Activated CD4-positive, alpha-beta memory T cell treated with anti-CD3 and anti-CD28 coated beads, Interleukin-2, amount 10 ng/mL, durations not matched to agents 7 days and 5 days (primary cell): ENCODE measurements at regions of chr15 and their contacts with region 1.

Region 1: DNA sequence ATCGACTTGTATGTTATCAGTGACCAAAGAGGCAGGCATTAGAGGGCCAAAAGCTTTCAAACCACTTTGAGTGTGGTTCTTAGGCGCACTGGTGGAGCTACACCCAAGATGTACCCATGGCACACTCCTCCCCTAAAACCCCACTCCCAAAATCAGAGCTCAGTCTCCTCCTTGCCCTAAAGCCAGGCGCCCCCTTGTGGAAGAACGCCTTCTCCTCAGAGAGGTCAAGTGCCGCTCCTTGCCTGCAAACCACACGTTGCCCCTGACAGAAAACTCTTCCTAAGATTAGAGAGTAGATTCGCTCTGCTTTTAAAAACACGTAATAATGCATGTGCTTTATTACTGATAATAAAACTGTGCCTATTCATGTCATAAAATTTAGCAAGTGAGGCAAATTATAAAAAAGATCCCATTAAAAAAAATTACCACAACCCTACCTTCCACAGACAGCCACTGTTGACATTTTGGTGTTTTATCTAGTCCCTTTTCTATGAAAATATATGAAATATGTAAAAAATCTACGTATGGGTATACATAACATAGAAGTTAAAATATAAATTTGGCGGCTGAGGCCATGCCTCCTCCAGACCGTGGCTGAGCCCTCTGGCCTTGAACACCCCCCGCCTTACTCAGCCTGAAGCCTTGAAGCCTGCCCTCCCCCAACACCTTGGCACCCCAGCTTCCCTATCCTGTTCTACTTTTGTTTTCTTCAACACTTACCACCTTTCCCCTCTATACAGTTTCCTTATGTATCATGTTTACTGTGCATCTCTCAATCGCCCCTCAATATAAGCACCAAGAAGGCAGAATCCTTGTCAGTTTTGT is 33.5 kb downstream of the BCL2L10 start:
- DNase-seq: peak; percentile 83
- H3K4me3 Mint-ChIP-seq: no peak overlapping the region
- H3K27ac Mint-ChIP-seq: no peak overlapping the region
- H3K4me1 Mint-ChIP-seq: peaks cover 43% of the 10 kb centered on the region
- H3K27me3 Mint-ChIP-seq: no peaks in the 10 kb centered on the region

Region 2: DNA sequence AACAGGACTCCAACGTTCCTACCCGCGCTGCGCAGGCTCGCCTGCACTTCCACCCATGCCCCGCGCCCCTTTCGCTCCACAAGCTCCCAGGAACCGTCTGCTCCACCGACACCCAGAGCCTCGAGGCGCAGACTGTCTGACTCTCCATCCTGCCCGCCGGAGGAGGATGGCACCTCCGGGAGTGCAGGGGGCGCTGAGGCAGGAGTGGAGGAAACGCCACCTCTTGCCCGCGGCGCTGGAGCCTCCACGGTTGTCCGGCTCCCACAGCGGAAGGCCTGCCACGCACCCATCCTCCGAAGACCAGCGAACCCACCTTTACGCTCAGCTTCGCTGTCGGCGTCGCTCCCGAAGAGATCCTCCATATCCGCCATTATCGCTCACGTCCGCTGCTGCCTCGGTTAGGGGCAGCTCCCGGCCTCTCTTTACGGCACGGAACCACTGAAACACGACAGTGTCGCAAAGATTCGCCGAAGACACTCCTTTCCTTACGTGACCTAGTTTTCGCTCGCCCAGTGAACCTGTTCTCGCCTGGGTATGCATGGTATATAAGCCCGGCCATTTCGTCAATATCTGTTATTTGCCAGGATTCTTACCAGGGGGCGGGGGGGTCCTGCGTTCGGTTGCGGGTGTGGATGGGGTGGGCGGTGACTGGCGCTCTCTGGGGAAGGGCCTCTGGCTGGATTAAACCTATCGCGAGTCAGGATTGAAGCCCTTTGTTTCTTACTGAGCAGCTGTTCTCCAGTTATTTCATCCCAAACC is 107.5 kb before region 1 on chr15 and contains the start of gene LEO1:
- CTCF ChIA-PET with region 1: interaction called, 13 read pairs
- POLR2A ChIA-PET with region 1: interaction called, 8 read pairs
- DNase-seq: peak; percentile 92
- H3K4me3 Mint-ChIP-seq: peak within 1 kb of the TSS; percentile 93
- H3K27ac Mint-ChIP-seq: peak within 1 kb of the TSS; percentile 87
- H3K4me1 Mint-ChIP-seq: peaks cover 33% of the 10 kb centered on the region
- H3K27me3 Mint-ChIP-seq: no peaks in the 10 kb centered on the region
- total RNA-seq, gene LEO1: 31.2 to 32.8 TPM

Region 3: DNA sequence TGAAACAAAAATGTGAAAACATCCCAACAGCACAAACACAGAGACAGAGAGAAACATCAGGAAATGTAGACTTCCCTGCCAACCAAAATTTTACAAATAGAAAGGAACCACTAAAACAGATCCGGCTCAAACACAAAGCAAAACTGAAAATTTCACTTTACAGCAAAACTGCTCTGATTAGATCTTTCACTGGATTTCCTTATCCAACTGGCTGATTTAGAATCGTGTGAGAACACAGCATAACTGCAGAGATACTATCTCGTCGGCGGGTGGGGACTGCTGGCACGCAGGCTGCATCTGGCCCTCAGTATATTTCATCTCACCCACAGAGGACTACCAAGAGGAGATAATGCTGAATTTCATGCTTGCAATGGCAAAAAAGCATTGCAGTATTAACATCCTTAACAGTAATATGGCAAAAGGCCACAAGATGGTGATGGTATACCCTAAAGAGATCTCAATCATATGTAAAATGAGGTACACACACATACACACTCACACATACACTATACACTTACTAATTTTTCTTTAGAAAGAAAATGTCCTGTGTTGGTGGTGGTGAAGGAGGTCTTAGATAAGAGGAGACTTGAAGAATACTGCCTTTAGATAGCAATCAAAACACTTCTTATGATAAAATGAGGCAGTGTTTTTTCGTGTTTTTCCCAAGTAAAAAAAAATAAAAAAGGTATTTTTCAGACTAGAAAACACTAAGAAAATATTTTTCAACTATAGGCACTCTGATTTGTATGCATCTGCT is 96.9 kb before region 1 on chr15:
- CTCF ChIA-PET with region 1: interaction called, 13 read pairs
- POLR2A ChIA-PET with region 1: interaction called, 6 read pairs
- DNase-seq: peak; percentile 80
- H3K4me3 Mint-ChIP-seq: peak overlapping the region; percentile 78
- H3K27ac Mint-ChIP-seq: peak overlapping the region; percentile 88
- H3K4me1 Mint-ChIP-seq: peaks cover 20% of the 10 kb centered on the region
- H3K27me3 Mint-ChIP-seq: no peaks in the 10 kb centered on the region

Region 4: DNA sequence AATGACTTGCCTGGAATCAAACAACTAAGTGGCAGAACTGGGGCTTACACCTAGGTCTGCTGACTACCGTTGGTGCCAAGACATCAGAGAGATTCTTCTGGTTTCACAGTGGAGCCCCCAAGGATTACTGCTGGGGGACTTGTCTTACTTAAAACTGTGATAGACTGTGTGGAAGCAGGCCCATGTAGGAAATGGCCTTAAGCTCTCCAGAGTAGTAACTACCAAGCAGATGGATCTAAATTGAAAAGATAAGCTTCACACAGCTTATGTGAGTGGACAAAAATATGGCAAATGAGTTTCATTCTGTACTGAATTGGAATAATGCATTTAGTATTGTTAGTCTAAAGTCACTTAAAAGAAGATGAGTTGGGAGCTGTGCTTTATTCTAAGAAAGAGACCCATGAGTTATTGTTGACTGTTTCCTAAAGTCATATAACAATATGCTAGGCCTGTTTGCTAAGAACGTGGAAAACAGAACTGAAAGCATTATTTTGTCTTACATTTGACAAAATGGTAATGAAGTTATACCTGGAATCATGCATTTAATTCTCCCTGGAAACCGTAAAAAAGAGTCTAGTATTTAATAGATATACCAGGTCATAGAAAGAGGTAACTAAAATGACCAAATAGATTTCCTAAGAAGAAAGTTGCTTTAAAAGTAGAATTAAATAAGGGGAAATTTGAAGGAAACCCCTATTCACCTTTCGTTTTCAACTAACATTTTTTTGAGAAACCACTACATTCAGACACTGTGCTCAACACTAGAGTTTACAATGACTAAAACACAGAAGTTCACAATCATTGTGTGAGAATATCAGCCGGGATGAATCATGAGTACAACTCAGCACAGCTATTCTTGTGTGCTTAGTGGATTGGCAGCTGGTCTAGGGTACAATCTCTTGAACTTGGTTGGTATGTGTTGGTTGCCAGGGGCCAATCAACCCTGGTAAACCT is 73.1 kb before region 1 on chr15:
- CTCF ChIA-PET with region 1: interaction called, 14 read pairs
- POLR2A ChIA-PET with region 1: no interaction called
- DNase-seq: peak; percentile 24
- H3K4me3 Mint-ChIP-seq: peak overlapping the region; percentile 40
- H3K27ac Mint-ChIP-seq: peak overlapping the region; percentile 77
- H3K4me1 Mint-ChIP-seq: peaks cover 66% of the 10 kb centered on the region
- H3K27me3 Mint-ChIP-seq: no peaks in the 10 kb centered on the region

Region 5: DNA sequence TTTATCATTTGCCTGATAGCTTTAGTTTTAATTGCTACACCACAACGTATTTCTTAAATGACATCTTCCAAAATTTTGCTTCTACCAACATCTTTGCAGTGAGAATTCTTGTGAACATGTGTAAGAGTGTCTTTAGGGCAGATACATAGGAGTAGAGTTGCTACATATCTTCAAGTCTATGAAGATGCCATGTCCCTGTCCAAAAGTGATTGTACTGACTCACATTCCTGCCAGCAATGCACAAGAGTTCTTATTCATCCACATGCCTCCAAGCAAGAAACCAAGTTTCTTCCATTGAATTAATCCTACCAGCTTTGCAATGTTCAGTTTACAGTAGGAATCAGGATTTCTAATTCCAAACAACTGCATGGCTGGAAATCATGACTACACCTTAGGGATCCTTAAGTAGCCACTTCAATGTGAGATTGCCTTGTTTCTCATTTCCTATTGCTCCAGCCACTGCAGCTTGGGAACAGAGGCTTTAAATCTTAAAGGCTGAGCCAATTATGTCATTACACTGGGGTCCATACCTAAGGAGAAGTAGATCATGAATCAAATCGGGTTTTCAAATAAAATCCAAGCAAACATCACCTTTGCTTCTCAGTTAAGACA is 11.0 kb before region 1 on chr15:
- CTCF ChIA-PET with region 1: interaction called, 28 read pairs
- POLR2A ChIA-PET with region 1: interaction called, 3 read pairs
- DNase-seq: no peak
- H3K4me3 Mint-ChIP-seq: no peak overlapping the region
- H3K27ac Mint-ChIP-seq: no peak overlapping the region
- H3K4me1 Mint-ChIP-seq: peaks cover 24% of the 10 kb centered on the region
- H3K27me3 Mint-ChIP-seq: no peaks in the 10 kb centered on the region

Region 6: GRCh38 chr15:52139599-52140491 is 60.8 kb after region 1 on chr15:
- CTCF ChIA-PET with region 1: interaction called, 18 read pairs
- POLR2A ChIA-PET with region 1: interaction called, 3 read pairs
- DNase-seq: peak; percentile 76
- H3K4me3 Mint-ChIP-seq: no peak overlapping the region
- H3K27ac Mint-ChIP-seq: no peak overlapping the region
- H3K4me1 Mint-ChIP-seq: peaks cover 20% of the 10 kb centered on the region
- H3K27me3 Mint-ChIP-seq: no peaks in the 10 kb centered on the region

Region 7: DNA sequence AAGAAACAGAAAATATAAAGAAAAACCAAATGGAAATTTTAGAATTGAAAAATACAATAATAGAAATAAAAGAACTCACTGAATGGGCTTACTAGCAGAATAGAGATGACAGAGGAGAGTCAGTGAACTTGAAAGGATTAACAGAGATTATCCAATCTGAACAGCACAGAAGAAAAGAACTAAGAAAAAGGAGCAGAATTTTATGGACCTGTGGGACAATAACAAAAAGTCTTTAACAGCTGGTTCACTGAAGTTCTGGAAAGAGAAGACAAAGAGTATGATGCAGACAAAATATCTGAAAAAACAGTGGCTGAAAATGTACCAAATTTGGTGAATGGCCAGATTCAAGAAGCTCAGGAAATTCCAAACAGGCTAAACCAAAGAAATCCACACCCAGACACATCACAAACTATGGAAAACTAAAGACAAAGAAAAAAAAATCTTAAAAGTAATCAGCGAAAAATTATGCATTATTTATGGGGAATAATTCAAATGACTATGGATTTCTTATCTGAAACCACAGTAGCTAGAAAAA is 121.8 kb after region 1 on chr15:
- CTCF ChIA-PET with region 1: no interaction called
- POLR2A ChIA-PET with region 1: no interaction called
- DNase-seq: no peak
- H3K4me3 Mint-ChIP-seq: no peak overlapping the region
- H3K27ac Mint-ChIP-seq: no peak overlapping the region
- H3K4me1 Mint-ChIP-seq: no peaks in the 10 kb centered on the region
- H3K27me3 Mint-ChIP-seq: peaks cover 3% of the 10 kb centered on the region

Region 8: DNA sequence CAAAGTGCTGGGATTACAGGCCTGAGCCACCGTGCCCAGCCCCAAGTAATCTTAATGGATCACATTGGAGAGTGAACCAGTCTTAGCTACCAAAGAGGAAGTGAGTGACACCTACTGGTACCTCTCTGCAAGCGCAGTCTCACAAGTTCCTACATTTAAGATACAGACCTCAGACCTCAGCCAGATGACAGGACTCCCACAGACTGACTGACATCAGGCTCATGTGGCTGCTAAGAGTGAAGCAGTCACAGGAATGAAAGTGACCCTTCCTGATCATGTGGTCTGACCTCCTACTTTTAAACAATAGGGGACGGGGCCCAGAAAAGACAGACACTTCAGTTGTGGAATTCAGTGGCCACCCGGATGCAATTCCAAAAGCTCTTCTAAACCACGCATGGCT is 148.4 kb after region 1 on chr15:
- CTCF ChIA-PET with region 1: interaction called, 14 read pairs
- POLR2A ChIA-PET with region 1: no interaction called
- DNase-seq: peak; percentile 77
- H3K4me3 Mint-ChIP-seq: no peak overlapping the region
- H3K27ac Mint-ChIP-seq: no peak overlapping the region
- H3K4me1 Mint-ChIP-seq: peaks cover 18% of the 10 kb centered on the region
- H3K27me3 Mint-ChIP-seq: no peaks in the 10 kb centered on the region